ENCODE measurements at regions of chr10 and their contacts with region 1.

Region 1: DNA sequence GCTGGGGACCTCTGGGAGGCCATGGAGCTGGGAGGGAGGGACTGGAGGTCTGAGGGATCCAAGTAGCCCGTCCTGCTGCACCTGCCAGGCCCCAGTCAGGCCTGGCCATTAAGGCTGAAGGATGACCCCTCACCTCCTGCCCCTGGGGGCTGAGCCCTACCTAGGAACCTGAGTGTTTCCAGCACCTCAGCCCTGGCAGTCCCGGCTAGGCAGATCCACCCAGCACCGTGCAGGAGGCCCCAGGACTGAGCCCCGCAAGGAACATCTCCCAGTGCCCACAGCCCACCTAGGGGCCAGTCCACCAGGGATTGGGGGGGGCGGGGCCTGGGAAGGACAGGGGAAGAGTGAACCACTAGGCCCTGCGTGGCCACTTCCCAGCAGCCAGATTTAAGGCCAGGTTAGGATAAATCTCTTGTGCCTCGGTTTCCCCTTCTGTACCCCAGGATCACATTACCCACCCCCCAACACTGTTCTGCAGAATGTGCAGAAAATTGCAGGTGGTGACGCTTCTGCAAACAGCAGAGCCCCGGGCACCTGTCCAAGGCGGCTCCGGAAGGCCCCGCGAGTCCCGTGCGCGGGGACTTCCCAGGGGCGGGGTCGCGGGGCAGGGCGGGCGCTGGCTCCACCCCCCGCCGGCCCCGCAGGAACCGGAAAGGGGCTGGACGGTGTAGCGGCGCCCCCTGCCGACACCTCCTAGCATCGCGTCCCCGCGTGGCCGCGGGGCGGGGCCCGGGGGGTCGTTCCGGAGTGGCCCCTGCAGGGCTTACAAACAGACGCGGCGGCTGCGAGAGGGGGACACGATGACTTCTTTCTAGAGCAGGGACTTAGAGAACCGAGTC is 55.9 kb downstream of the PWWP2B start:
- DNase-seq: peak; percentile 77 to 91 (median 80)
- H3K4me3 ChIP-seq: peak overlapping the region in 2 of 3 experiments; percentile 1 to 43
- H3K4me3 Mint-ChIP-seq: peak overlapping the region; percentile 48 to 78
- H3K27ac ChIP-seq: peak overlapping the region; percentile 42 to 75
- H3K27ac Mint-ChIP-seq: peak overlapping the region; percentile 66 to 91 (median 82)
- H3K4me1 ChIP-seq: peaks cover 44 to 48% of the 10 kb centered on the region in 2 donors
- H3K4me1 Mint-ChIP-seq: peaks cover 34% of the 10 kb centered on the region
- H3K27me3 ChIP-seq: peaks cover 0 to 2% of the 10 kb centered on the region in 2 donors
- H3K27me3 Mint-ChIP-seq: peaks cover 2 to 6% (median 2%) of the 10 kb centered on the region in 3 donors
- CTCF ChIP-seq: peak; percentile 99

Region 2: GRCh38 chr10:132223156-132223590 is 229.7 kb before region 1 on chr10:
- intact Hi-C with region 1: loop called (anchors 2 to 5 kb)
- DNase-seq: peak; percentile 74 to 84 (median 80)
- H3K4me3 ChIP-seq: no peak overlapping the region
- H3K4me3 Mint-ChIP-seq: no peak overlapping the region
- H3K27ac ChIP-seq: no peak overlapping the region
- H3K27ac Mint-ChIP-seq: no peak overlapping the region
- H3K4me1 ChIP-seq: peaks cover 38 to 45% of the 10 kb centered on the region in 2 donors
- H3K4me1 Mint-ChIP-seq: peaks cover 40% of the 10 kb centered on the region
- H3K27me3 ChIP-seq: no peaks in the 10 kb centered on the region
- H3K27me3 Mint-ChIP-seq: peaks cover 1 to 3% (median 2%) of the 10 kb centered on the region in 3 donors
- CTCF ChIP-seq: peak; percentile 91

Region 3: DNA sequence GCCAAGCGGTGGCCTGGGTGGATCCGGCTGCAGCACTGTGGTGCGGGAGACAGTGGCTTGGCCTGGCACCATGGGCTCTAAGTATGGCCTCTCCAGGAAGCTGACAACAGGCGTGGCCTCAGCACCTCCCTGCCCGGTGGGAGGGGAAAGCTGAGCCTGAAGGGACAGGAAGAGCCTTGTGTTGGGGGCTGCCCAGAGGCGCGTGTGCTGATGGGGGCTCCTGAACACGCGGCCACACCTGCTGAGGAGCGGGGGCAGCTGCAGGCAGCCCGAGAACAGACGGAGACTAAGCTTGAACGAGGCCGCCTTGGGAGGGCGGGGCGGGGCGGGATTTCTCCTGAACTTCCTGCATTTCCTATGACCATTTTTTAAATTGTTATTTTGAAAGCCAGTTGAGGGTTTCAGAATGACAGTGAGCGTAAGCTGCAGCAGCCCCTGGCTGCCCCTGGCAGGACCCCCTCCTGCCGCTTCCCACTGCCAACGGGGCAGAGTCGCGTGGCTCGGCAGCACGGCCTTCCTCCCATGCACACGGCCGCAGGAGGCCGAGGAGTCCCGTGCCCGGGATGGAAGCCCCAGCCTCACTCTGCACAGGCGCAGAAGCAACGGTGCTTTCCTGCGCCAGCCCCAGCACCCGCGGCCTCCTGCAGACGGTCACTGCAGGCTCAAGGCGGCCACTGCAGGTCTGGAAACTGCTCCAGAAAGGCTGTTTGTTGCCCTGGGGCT is 222.9 kb before region 1 on chr10:
- intact Hi-C with region 1: loop called in 1 of 2 experiments (anchors 5 kb)
- DNase-seq: peak; percentile 31 to 63 (median 32)
- H3K4me3 ChIP-seq: peak overlapping the region in 2 of 3 experiments; percentile 28 to 63
- H3K4me3 Mint-ChIP-seq: peak overlapping the region; percentile 79 to 89
- H3K27ac ChIP-seq: peak overlapping the region; percentile 24 to 72
- H3K27ac Mint-ChIP-seq: peak overlapping the region; percentile 50 to 90 (median 83)
- H3K4me1 ChIP-seq: peaks cover 72 to 80% of the 10 kb centered on the region in 2 donors
- H3K4me1 Mint-ChIP-seq: peaks cover 45% of the 10 kb centered on the region
- H3K27me3 ChIP-seq: peaks cover 0 to 15% of the 10 kb centered on the region in 2 donors
- H3K27me3 Mint-ChIP-seq: peaks cover 6 to 13% (median 11%) of the 10 kb centered on the region in 3 donors
- CTCF ChIP-seq: no peak

Region 4: DNA sequence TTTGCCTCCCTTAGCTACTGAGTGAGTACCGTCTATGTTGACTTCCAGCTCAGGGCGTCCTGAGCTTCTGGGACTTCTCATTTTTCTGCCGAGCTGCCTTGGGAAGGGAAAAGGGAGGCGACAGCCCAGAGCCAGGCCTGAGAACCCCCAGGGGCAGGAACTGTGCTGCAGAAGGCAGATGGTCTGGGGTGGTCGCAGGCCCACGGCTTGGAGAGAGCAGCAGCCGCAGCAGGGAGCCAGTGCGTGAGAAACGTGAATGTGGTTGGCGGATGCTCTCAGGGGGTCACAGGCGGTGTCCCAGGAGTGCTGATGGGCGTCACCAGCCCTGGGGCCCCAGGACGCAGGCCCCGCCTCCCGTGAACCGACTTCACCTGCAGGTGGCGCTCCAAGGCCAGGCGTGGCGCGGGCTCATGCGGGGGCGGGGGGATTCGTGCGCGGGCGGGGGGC is 65.1 kb before region 1 on chr10:
- intact Hi-C with region 1: loop called (anchors 2 kb)
- DNase-seq: peak; percentile 61 to 71 (median 61)
- H3K4me3 ChIP-seq: peak overlapping the region in 2 of 3 experiments; percentile 25 to 65
- H3K4me3 Mint-ChIP-seq: peak overlapping the region; percentile 70 to 75
- H3K27ac ChIP-seq: peak overlapping the region; percentile 63 to 71
- H3K27ac Mint-ChIP-seq: peak overlapping the region; percentile 51 to 93 (median 84)
- H3K4me1 ChIP-seq: peaks cover 36 to 57% of the 10 kb centered on the region in 2 donors
- H3K4me1 Mint-ChIP-seq: peaks cover 46% of the 10 kb centered on the region
- H3K27me3 ChIP-seq: peaks cover 0 to 6% of the 10 kb centered on the region in 2 donors
- H3K27me3 Mint-ChIP-seq: peaks cover 3 to 21% (median 5%) of the 10 kb centered on the region in 3 donors
- CTCF ChIP-seq: peak; percentile 52

Measured in CD14-positive monocyte (primary cell).